ENCODE measurements at regions of chr14 and their contacts with region 1.

Region 1: DNA sequence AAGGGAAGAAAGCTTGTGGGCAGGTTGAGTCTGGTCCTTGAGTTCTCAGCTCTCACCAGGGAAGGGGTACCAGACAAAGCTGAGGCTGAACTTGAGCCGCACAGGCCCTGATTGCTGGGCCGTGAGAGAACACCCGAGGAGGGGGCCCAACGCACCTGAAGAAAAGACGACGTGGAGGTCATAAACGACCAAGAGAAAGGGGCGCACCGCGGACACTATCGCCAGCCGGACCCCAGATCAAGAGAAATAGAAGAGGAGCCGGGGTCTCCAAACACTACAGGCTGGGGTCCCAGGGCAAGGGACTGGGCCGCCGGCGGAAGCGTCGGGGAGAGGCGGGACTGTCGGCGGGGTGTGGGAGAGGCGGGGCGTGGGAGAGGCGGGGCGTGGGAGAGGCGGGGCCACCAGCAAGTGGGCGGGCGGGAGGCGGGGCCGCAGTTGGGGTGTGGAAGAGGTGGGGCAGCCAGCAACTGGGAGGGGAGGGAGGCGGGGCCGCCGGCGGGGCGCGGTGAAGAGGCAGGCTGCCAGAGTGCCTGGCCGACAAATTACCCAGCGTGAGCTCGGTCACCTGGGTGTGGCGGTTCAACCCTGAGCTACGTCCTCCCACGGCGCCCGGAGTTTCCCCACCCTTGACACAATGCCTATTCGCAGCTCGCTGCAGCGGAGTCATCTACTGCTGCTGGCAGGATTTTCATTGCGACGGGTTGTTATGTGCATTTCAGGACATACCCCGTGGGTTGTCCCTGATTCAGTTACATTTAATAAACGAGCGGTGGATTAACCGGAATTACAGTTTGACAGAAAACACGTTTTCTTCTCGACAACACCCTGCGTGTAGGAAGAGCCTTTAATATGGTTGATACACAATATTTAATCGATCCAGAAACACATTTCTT is 15.5 kb upstream of the NEMF start:
- DNase-seq: peak; percentile 85
- ATAC-seq: peak; percentile 84
- H3K4me3 Mint-ChIP-seq: peak overlapping the region; percentile 95
- H3K27ac Mint-ChIP-seq: peak overlapping the region; percentile 100
- H3K4me1 Mint-ChIP-seq: peaks cover 44% of the 10 kb centered on the region
- H3K27me3 Mint-ChIP-seq: no peaks in the 10 kb centered on the region
- CTCF ChIP-seq: no peak

Region 2: GRCh38 chr14:49892636-49893308 is 24.7 kb after region 1 on chr14 and contains the start of gene ARF6:
- CTCF ChIA-PET with region 1: interaction called, 30 read pairs
- POLR2A ChIA-PET with region 1: interaction called, 124 read pairs
- intact Hi-C with region 1: loop called (anchors 1 kb)
- DNase-seq: peak; percentile 98
- ATAC-seq: peak; percentile 85
- H3K4me3 Mint-ChIP-seq: peak within 1 kb of the TSS; percentile 96
- H3K27ac Mint-ChIP-seq: peak within 1 kb of the TSS; percentile 98
- H3K4me1 Mint-ChIP-seq: peaks cover 38% of the 10 kb centered on the region
- H3K27me3 Mint-ChIP-seq: no peaks in the 10 kb centered on the region
- CTCF ChIP-seq: no peak
- total RNA-seq, gene ARF6: 136 and 142 TPM in 2 replicates

Region 3: GRCh38 chr14:50038398-50039119 is 170.5 kb after region 1 on chr14:
- CTCF ChIA-PET with region 1: interaction called, 10 read pairs
- POLR2A ChIA-PET with region 1: interaction called, 32 read pairs
- intact Hi-C with region 1: no loop called
- DNase-seq: no peak
- ATAC-seq: peak; percentile 78
- H3K4me3 Mint-ChIP-seq: peak overlapping the region; percentile 52
- H3K27ac Mint-ChIP-seq: peak overlapping the region; percentile 93
- H3K4me1 Mint-ChIP-seq: peaks cover 45% of the 10 kb centered on the region
- H3K27me3 Mint-ChIP-seq: no peaks in the 10 kb centered on the region
- CTCF ChIP-seq: no peak

Region 4: GRCh38 chr14:50085570-50086320 is 217.7 kb after region 1 on chr14:
- CTCF ChIA-PET with region 1: interaction called, 14 read pairs
- POLR2A ChIA-PET with region 1: interaction called, 50 read pairs
- intact Hi-C with region 1: loop called (anchors 1 kb)
- DNase-seq: peak; percentile 44
- ATAC-seq: peak; percentile 75
- H3K4me3 Mint-ChIP-seq: peak overlapping the region; percentile 68
- H3K27ac Mint-ChIP-seq: peak overlapping the region; percentile 97
- H3K4me1 Mint-ChIP-seq: peaks cover 92% of the 10 kb centered on the region
- H3K27me3 Mint-ChIP-seq: no peaks in the 10 kb centered on the region
- CTCF ChIP-seq: no peak

Region 5: GRCh38 chr14:50116181-50116956 is 248.3 kb after region 1 on chr14 and contains the start of gene VCPKMT:
- CTCF ChIA-PET with region 1: interaction called, 6 read pairs
- POLR2A ChIA-PET with region 1: interaction called, 84 read pairs
- intact Hi-C with region 1: no loop called
- DNase-seq: peak; percentile 97
- ATAC-seq: peak; percentile 96
- H3K4me3 Mint-ChIP-seq: peak within 1 kb of the TSS; percentile 95
- H3K27ac Mint-ChIP-seq: peak within 1 kb of the TSS; percentile 97
- H3K4me1 Mint-ChIP-seq: peaks cover 51% of the 10 kb centered on the region
- H3K27me3 Mint-ChIP-seq: no peaks in the 10 kb centered on the region
- CTCF ChIP-seq: no peak
- total RNA-seq, gene VCPKMT: 19.9 and 20.8 TPM in 2 replicates

Region 6: DNA sequence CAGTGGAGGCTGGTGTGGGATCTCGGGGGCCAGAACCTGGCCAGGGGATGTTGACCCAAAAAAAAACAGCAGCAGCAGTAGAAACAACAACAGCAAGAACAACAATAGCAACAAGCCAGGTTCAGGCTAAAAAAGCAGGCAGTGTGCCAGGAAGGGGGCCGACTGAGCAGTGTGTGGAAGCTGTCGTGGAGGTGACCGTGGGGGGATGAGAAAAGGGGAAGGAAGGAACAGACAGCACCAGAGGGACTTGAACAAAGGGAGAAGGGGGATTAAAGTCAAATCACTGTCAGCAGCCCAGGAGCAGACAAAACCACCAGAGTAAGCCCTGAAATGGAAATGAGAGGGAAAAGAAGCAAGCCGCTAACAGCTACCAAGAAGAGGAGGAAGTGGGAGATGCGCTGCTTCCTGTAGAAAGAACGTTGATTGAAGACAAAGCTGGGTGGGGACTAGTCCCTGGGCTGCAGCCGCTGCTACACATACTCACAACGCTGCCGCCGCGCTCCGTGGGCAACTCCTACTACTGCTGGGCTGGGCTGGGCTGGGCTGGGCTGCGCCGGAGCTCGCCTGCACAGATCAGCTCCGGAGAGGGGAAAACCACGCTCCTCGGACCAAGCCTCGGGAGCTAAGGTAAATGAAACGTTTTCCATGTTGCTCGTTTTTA is 1992.2 kb after region 1 on chr14 and contains the start of gene GNG2:
- CTCF ChIA-PET with region 1: no interaction called
- POLR2A ChIA-PET with region 1: no interaction called
- intact Hi-C with region 1: loop called (anchors 10 kb)
- DNase-seq: peak; percentile 58
- ATAC-seq: peak; percentile 95
- H3K4me3 Mint-ChIP-seq: peak within 1 kb of the TSS; percentile 95
- H3K27ac Mint-ChIP-seq: peak within 1 kb of the TSS; percentile 88
- H3K4me1 Mint-ChIP-seq: peaks cover 70% of the 10 kb centered on the region
- H3K27me3 Mint-ChIP-seq: no peaks in the 10 kb centered on the region
- CTCF ChIP-seq: no peak
- total RNA-seq, gene GNG2: 68.7 and 70.0 TPM in 2 replicates